GM12878 (cell line): ENCODE measurements at regions of chr1 and their contacts with region 1.

Region 1: DNA sequence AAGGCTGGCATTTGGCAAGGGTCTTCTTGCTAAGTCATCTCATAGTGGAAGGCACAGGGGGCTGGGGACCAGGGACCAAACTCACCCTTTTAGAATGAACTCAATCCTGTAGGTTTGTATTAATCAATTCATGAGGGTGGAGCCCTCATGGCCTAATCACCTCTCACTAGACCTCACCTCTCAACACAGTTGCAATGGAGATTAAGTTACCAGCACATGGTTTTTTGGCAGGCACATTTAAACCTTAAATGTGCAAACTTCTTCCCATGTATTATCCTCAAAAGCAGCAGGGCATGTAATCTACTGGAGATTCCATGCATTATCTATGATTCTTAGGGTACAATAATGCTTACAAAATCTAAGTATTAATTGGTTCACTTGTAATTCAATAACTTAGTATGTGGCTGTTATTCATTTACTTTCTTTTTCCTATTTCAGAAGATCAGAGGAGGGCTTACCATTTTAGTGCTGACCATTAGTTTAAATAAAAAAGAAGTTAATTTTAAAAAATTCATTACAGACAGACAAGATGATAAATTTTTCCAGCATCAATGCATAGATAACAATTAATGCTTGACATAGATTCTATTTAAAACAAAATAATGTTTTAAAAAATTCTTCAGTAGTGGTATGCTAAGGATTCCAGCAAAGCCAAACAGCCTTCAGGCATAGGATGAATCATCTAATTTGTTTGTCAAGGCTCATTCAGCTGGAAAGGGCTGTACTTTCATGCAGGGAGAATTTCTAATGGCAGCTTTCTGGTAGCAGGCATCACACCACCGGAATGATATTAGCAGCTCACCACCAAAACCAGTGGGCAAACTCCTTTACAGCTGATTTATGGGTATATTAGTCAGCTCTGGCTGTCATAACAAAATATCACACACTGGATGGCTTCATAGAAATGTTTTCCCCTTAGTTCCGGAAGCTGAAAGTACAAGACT is 124.6 kb upstream of the ZNF648 start:
- DNase-seq: no peak
- ATAC-seq: no peak
- H3K4me3 ChIP-seq: no peak overlapping the region
- H3K27ac ChIP-seq: no peak overlapping the region
- H3K4me1 ChIP-seq: no peaks in the 10 kb centered on the region
- H3K27me3 ChIP-seq: no peaks in the 10 kb centered on the region
- CTCF ChIP-seq: no peak
- EP300 ChIP-seq: no peak
- POLR2A ChIP-seq: no peak
- RAD21 ChIP-seq: no peak

Region 2: DNA sequence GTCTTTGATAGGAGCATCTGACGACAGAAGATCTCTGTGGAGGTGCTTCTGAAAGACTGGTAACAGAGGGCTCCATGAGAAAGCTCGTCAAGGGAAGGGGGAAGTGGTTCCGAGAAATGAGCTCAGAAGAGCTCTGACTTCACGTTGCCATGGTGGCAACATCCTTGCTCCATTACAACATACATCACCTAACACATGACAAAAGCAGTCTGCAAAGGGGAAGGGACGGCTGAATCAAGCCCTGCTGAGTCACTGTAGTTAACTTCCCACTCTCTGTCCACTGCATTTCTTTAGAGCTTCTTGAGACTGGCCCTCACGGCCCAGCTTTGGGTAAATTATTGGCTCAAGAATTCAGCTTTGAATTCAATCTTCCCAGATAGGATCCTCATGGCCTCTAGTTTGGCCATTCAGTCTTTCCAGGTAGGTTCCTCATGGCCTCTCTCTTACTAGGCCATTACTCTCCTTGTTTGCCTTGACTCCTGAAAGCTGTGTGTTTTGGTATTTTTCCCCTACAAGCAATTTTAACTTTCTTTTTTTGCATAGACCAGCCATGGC is 36.6 kb before region 1 on chr1:
- CTCF ChIA-PET with region 1: interaction called, 22 read pairs
- POLR2A ChIA-PET with region 1: interaction called, 3 read pairs
- RAD21 ChIA-PET with region 1: interaction called, 4 read pairs
- SMC1A ChIA-PET with region 1: interaction called, 29 read pairs
- in situ Hi-C with region 1: no loop called
- intact Hi-C with region 1: no loop called
- DNase-seq: no peak
- ATAC-seq: peak; percentile 29
- H3K4me3 ChIP-seq: no peak overlapping the region
- H3K27ac ChIP-seq: no peak overlapping the region
- H3K4me1 ChIP-seq: peaks cover 9% of the 10 kb centered on the region
- H3K27me3 ChIP-seq: no peaks in the 10 kb centered on the region
- CTCF ChIP-seq: no peak
- EP300 ChIP-seq: no peak
- POLR2A ChIP-seq: no peak
- RAD21 ChIP-seq: no peak

Region 3: GRCh38 chr1:182166750-182167149 is 19.3 kb before region 1 on chr1:
- CTCF ChIA-PET with region 1: no interaction called
- POLR2A ChIA-PET with region 1: no interaction called
- RAD21 ChIA-PET with region 1: no interaction called
- SMC1A ChIA-PET with region 1: no interaction called
- in situ Hi-C with region 1: no loop called
- intact Hi-C with region 1: no loop called
- DNase-seq: no peak
- ATAC-seq: no peak
- H3K4me3 ChIP-seq: no peak overlapping the region
- H3K27ac ChIP-seq: no peak overlapping the region
- H3K4me1 ChIP-seq: no peaks in the 10 kb centered on the region; the same call in 1 of the 2 replicates
- H3K27me3 ChIP-seq: no peaks in the 10 kb centered on the region; a peak in 1 of 4 replicates
- CTCF ChIP-seq: no peak
- EP300 ChIP-seq: no peak
- POLR2A ChIP-seq: no peak
- RAD21 ChIP-seq: no peak

Region 4: GRCh38 chr1:182198049-182198501 is 12.0 kb after region 1 on chr1:
- CTCF ChIA-PET with region 1: interaction called, 18 read pairs
- POLR2A ChIA-PET with region 1: interaction called, 5 read pairs
- RAD21 ChIA-PET with region 1: no interaction called
- SMC1A ChIA-PET with region 1: interaction called, 18 read pairs
- in situ Hi-C with region 1: no loop called
- intact Hi-C with region 1: no loop called
- DNase-seq: no peak
- ATAC-seq: peak; percentile 32; the same call in 1 of the 3 replicates
- H3K4me3 ChIP-seq: no peak overlapping the region
- H3K27ac ChIP-seq: no peak overlapping the region
- H3K4me1 ChIP-seq: no peaks in the 10 kb centered on the region
- H3K27me3 ChIP-seq: peaks cover 0 to 3% of the 10 kb centered on the region in 2 experiments; a peak in 1 of 4 replicates
- CTCF ChIP-seq: peak; percentile 25 to 46 (median 35); a peak in 5 of 6 replicates
- EP300 ChIP-seq: no peak
- POLR2A ChIP-seq: no peak
- RAD21 ChIP-seq: peak; percentile 60

Region 5: DNA sequence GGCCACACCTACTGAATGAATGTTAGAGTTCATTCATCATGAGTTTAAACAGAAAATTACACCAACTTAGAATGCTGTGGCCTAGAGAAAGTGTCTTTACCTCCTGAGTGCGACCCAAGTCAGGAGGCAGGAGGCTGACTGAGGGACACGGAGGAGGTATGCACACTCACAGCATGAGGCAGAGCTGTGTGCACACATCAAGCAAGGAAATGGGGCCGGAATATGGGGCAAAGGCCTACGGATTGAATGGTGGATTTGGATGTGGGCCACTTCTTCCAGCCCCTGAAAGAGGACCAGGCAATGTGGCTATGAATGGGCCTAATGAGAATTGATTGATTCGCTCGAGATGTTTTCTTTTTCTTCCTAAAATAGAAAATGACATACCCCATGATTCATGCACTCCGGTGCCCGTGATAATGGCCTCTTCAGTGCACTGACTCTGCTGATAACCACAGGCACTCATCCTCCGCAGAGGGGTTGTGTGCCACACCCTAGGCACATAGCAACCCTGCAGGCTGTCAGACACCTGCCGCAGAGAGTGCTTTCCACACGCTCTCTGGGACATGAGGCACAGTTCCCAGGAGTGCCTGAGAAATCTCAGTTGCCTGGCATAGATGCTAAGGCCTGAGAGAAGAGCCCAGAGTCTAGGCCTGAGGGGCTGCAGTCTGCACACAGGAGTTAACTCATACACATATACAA is 50.0 kb after region 1 on chr1:
- CTCF ChIA-PET with region 1: no interaction called
- POLR2A ChIA-PET with region 1: no interaction called
- RAD21 ChIA-PET with region 1: no interaction called
- SMC1A ChIA-PET with region 1: no interaction called
- in situ Hi-C with region 1: no loop called
- intact Hi-C with region 1: no loop called
- DNase-seq: no peak
- ATAC-seq: peak; percentile 27; the same call in 2 of the 3 replicates
- H3K4me3 ChIP-seq: no peak overlapping the region
- H3K27ac ChIP-seq: no peak overlapping the region
- H3K4me1 ChIP-seq: no peaks in the 10 kb centered on the region
- H3K27me3 ChIP-seq: no peaks in the 10 kb centered on the region
- CTCF ChIP-seq: no peak
- EP300 ChIP-seq: no peak
- POLR2A ChIP-seq: no peak
- RAD21 ChIP-seq: no peak